B cell (primary cell): ENCODE measurements at regions of chr7 and their contacts with region 1.

Region 1: DNA sequence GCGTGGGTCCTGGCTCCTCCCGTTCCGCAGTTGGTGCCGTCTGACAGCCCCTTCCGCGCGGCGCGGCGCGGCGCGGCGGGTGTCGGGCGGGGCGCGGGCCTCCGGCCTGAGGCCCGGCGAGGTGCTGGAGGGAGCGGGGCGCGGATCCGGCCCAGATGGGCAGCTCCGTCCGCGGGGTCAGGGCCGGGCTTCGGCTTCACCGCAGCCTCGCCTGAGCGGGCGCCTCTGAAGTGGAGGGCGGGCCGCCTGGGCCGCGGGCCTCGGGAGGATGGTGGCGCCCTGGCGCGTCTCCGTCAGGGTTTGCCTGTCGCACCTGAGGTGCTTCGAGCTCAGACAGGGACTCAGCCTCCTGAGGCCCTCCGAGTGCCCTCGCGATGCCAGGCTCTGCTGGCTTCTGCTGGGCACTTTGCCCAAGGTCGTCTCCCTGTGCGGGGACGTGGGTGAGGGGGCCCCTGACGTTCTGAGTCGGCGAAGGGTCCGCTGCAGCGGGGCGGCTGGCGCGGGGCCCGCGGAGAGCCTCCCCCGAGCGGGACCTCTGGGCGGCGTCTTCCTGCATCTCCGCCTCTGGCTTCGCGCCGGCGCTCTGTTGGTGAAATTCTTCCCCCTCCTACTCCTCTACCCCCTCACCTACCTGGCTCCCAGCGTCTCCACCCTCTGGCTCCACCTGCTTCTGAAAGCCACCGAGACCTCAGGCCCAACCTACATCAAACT is 473 bp downstream of the ADCK2 start:
- DNase-seq: peak; percentile 83
- ATAC-seq: peak; percentile 55
- H3K4me3 ChIP-seq: peak overlapping the region; percentile 4 to 76 (median 70)
- H3K4me3 Mint-ChIP-seq: peak overlapping the region; percentile 87
- H3K27ac ChIP-seq: peak overlapping the region; percentile 48 to 79
- H3K27ac Mint-ChIP-seq: peak overlapping the region; percentile 91
- H3K4me1 ChIP-seq: peaks cover 46 to 54% of the 10 kb centered on the region in 2 donors
- H3K4me1 Mint-ChIP-seq: peaks cover 52% of the 10 kb centered on the region
- H3K27me3 ChIP-seq: no peaks in the 10 kb centered on the region
- H3K27me3 Mint-ChIP-seq: no peaks in the 10 kb centered on the region
- CTCF ChIP-seq: no peak

Region 2: GRCh38 chr7:140314573-140315480 is 358.4 kb before region 1 on chr7:
- CTCF ChIA-PET with region 1: no interaction called
- POLR2A ChIA-PET with region 1: no interaction called
- intact Hi-C with region 1: no loop called
- DNase-seq: no peak
- ATAC-seq: no peak
- H3K4me3 ChIP-seq: no peak overlapping the region
- H3K4me3 Mint-ChIP-seq: no peak overlapping the region
- H3K27ac ChIP-seq: no peak overlapping the region
- H3K27ac Mint-ChIP-seq: no peak overlapping the region
- H3K4me1 ChIP-seq: no peaks in the 10 kb centered on the region
- H3K4me1 Mint-ChIP-seq: peaks cover 2% of the 10 kb centered on the region
- H3K27me3 ChIP-seq: peaks cover 0 to 4% (median 0%) of the 10 kb centered on the region in 4 experiments
- H3K27me3 Mint-ChIP-seq: peaks cover 27% of the 10 kb centered on the region
- CTCF ChIP-seq: no peak

Region 3: GRCh38 chr7:140397784-140398750 is 275.2 kb before region 1 on chr7 and contains the start of gene SLC37A3:
- CTCF ChIA-PET with region 1: no interaction called
- POLR2A ChIA-PET with region 1: no interaction called
- intact Hi-C with region 1: loop called (anchors 10 kb)
- DNase-seq: peak; percentile 86
- ATAC-seq: peak; percentile 97
- H3K4me3 ChIP-seq: peak within 1 kb of the TSS; percentile 62 to 69 (median 67)
- H3K4me3 Mint-ChIP-seq: peak within 1 kb of the TSS; percentile 98
- H3K27ac ChIP-seq: peak within 1 kb of the TSS in 1 of 2 donors; percentile 75
- H3K27ac Mint-ChIP-seq: peak within 1 kb of the TSS; percentile 83
- H3K4me1 ChIP-seq: peaks cover 7 to 11% of the 10 kb centered on the region in 2 donors
- H3K4me1 Mint-ChIP-seq: peaks cover 13% of the 10 kb centered on the region
- H3K27me3 ChIP-seq: no peaks in the 10 kb centered on the region
- H3K27me3 Mint-ChIP-seq: peaks cover 3% of the 10 kb centered on the region
- CTCF ChIP-seq: no peak
- total RNA-seq, gene SLC37A3: 20.1 TPM in 2 replicates

Region 4: GRCh38 chr7:140653319-140654108 is 19.7 kb before region 1 on chr7:
- CTCF ChIA-PET with region 1: interaction called, 17 read pairs
- POLR2A ChIA-PET with region 1: interaction called, 4 read pairs
- intact Hi-C with region 1: loop called (anchors 2 kb)
- DNase-seq: peak; percentile 72
- ATAC-seq: peak; percentile 46
- H3K4me3 ChIP-seq: no peak overlapping the region
- H3K4me3 Mint-ChIP-seq: peak overlapping the region; percentile 42
- H3K27ac ChIP-seq: no peak overlapping the region
- H3K27ac Mint-ChIP-seq: peak overlapping the region; percentile 8
- H3K4me1 ChIP-seq: peaks cover 15 to 19% of the 10 kb centered on the region in 2 donors
- H3K4me1 Mint-ChIP-seq: peaks cover 22% of the 10 kb centered on the region
- H3K27me3 ChIP-seq: no peaks in the 10 kb centered on the region
- H3K27me3 Mint-ChIP-seq: peaks cover 2% of the 10 kb centered on the region
- CTCF ChIP-seq: peak; percentile 91

Region 5: DNA sequence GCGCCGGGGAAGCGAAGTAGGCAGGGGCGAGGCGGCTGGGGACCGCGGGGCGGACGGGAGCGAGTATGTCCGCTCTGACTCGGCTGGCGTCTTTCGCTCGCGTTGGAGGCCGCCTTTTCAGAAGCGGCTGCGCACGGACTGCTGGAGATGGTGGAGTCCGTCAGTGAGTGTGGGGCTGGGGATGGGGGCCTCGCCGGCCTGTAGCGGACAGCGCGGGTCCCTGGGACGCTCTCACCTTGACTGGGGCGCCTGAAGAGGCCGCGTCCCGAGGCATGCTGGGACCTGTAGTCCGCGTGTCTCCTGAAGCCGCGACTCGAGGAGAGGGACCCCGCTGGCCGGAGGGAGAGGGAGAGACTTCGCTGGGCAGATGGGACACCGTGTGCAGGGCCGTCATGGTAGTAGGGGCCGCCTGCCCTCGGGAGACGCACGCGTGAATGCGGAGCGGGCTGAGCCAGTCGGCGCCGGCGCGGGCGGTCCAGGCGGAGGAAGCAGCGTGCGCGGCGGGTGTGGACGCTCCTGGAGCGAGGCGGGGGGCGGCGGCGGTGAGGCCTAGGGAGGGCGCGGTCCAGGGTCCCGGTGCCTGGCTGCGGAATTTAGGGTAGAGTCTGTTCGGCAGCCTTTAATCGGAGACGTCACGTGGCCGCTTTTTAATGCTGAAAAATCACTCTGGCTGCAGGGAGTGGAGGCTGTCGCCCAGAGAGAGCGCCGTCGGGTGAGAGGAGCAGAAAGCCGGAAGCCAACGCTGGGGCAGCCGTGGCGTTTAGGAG is 23.6 kb after region 1 on chr7 and contains the start of gene NDUFB2:
- CTCF ChIA-PET with region 1: interaction called, 8 read pairs
- POLR2A ChIA-PET with region 1: interaction called, 4 read pairs
- intact Hi-C with region 1: loop called (anchors 1 kb)
- DNase-seq: peak; percentile 93
- ATAC-seq: peak; percentile 85
- H3K4me3 ChIP-seq: peak within 1 kb of the TSS; percentile 55 to 97 (median 94)
- H3K4me3 Mint-ChIP-seq: peak within 1 kb of the TSS; percentile 99
- H3K27ac ChIP-seq: peak within 1 kb of the TSS; percentile 84
- H3K27ac Mint-ChIP-seq: peak within 1 kb of the TSS; percentile 97
- H3K4me1 ChIP-seq: peaks cover 15 to 21% of the 10 kb centered on the region in 2 donors
- H3K4me1 Mint-ChIP-seq: peaks cover 37% of the 10 kb centered on the region
- H3K27me3 ChIP-seq: no peaks in the 10 kb centered on the region
- H3K27me3 Mint-ChIP-seq: no peaks in the 10 kb centered on the region
- CTCF ChIP-seq: no peak
- total RNA-seq, gene NDUFB2: 67.9 and 77.3 TPM in 2 replicates

Region 6: GRCh38 chr7:140707132-140707531 is 33.9 kb after region 1 on chr7:
- CTCF ChIA-PET with region 1: interaction called, 4 read pairs
- POLR2A ChIA-PET with region 1: no interaction called
- intact Hi-C with region 1: loop called (anchors 5 kb)
- DNase-seq: no peak
- ATAC-seq: no peak
- H3K4me3 ChIP-seq: no peak overlapping the region
- H3K4me3 Mint-ChIP-seq: no peak overlapping the region
- H3K27ac ChIP-seq: no peak overlapping the region
- H3K27ac Mint-ChIP-seq: no peak overlapping the region
- H3K4me1 ChIP-seq: no peaks in the 10 kb centered on the region
- H3K4me1 Mint-ChIP-seq: no peaks in the 10 kb centered on the region
- H3K27me3 ChIP-seq: no peaks in the 10 kb centered on the region
- H3K27me3 Mint-ChIP-seq: no peaks in the 10 kb centered on the region
- CTCF ChIP-seq: no peak

Region 7: GRCh38 chr7:140752533-140752932 is 79.3 kb after region 1 on chr7:
- CTCF ChIA-PET with region 1: no interaction called
- POLR2A ChIA-PET with region 1: no interaction called
- intact Hi-C with region 1: no loop called
- DNase-seq: no peak
- ATAC-seq: no peak
- H3K4me3 ChIP-seq: no peak overlapping the region
- H3K4me3 Mint-ChIP-seq: no peak overlapping the region
- H3K27ac ChIP-seq: no peak overlapping the region
- H3K27ac Mint-ChIP-seq: no peak overlapping the region
- H3K4me1 ChIP-seq: no peaks in the 10 kb centered on the region
- H3K4me1 Mint-ChIP-seq: no peaks in the 10 kb centered on the region
- H3K27me3 ChIP-seq: no peaks in the 10 kb centered on the region
- H3K27me3 Mint-ChIP-seq: no peaks in the 10 kb centered on the region
- CTCF ChIP-seq: no peak